Heart right ventricle (tissue), 16 donors: ENCODE measurements at regions of chr10 and their contacts with region 1.

Region 1: DNA sequence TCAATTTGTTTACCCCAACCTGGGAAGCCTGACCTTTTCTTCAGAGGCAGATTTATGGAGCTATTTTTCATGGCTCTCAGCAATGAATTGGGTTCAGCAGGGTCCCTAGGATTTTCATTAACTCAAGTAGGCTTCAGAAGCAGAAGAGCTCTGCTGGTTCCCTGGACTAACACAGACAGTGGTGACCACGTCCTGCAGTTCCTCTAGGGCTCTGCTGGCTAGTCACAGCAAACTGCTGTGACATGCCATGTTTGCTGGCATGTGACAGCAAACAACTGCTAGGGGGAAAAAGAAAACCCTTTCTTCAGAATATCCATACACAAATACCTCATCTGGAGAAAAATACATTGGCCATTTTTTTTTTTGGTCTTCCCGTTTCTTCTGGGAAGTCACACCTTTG is 13.2 kb downstream of the BAMBI start:
- DNase-seq: no peak
- ATAC-seq: no peak
- H3K4me3 ChIP-seq: no peak overlapping the region
- H3K27ac ChIP-seq: no peak overlapping the region
- H3K4me1 ChIP-seq: peaks cover 0 to 17% (median 9%) of the 10 kb centered on the region in 9 donors
- H3K27me3 ChIP-seq: peaks cover 0 to 5% (median 0%) of the 10 kb centered on the region in 7 donors
- CTCF ChIP-seq: no peak

Region 2: DNA sequence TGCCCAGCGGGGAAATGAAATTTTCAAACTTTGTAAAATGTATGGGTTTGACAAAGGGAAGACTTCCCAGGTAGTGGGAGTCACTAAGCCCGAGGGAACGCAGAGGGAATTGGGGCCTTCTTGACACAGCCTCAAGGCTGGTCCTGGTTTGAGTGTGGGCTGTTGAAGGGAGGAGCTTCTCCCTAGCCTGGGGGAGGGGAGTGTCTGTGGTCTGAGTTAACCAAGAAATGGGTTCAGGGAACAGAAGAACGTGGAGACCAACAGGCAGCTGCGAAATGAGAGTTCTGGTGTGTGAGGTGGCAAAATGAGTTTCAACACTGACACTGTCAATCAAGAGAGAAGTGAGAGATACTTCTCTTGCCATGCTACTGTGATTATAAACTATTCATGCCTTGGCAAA is 45.9 kb before region 1 on chr10:
- intact Hi-C with region 1: no loop called
- DNase-seq: no peak
- ATAC-seq: no peak
- H3K4me3 ChIP-seq: no peak overlapping the region
- H3K27ac ChIP-seq: no peak overlapping the region
- H3K4me1 ChIP-seq: no peaks in the 10 kb centered on the region
- H3K27me3 ChIP-seq: no peaks in the 10 kb centered on the region
- CTCF ChIP-seq: no peak

Region 3: DNA sequence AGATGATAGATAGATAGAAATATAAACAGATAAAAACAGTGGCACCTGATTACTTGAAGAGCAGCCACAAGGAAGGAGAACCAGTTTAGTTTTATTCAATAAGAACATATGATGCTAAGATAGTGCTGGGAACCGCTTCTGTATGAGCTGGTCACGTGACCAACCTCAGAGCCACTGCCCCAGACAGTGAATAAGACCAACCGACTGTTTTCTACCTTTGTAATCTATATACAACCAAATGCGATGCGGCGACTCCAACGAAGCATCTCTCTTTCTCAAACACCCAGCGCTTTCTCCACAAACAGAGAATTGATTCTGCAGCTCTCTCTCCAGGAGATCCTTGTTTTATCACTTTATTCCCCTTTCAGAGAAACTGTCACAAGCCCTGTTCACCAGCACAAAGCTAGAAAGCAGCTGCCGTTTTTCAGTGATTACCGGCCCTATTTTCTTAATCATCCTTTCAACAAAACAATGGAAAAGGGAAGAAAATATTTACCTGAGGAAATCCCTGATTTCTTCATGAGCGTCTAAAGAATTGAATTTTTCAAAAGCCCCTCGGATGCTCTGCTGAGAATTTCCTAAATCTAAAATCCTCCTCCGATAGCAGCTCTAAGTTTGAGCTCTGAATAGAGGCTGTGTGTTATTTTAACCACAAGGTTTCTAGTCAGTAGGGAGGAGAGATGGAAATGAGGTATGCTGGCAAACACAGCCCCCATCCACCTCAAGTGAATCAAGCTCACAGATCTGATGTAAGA is 1424.5 kb after region 1 on chr10:
- intact Hi-C with region 1: loop called in 1 of 10 experiments (anchors 5 kb)
- DNase-seq: no peak
- ATAC-seq: peak in 2 of 8 donors; percentile 47 to 49
- H3K4me3 ChIP-seq: peak overlapping the region in 5 of 10 donors; percentile 16 to 37 (median 30)
- H3K27ac ChIP-seq: no peak overlapping the region
- H3K4me1 ChIP-seq: peaks cover 0 to 22% (median 12%) of the 10 kb centered on the region in 9 donors
- H3K27me3 ChIP-seq: peaks cover 0 to 17% (median 0%) of the 10 kb centered on the region in 7 donors
- CTCF ChIP-seq: no peak